ENCODE measurements at regions of chr1 and their contacts with region 1.

Region 1: DNA sequence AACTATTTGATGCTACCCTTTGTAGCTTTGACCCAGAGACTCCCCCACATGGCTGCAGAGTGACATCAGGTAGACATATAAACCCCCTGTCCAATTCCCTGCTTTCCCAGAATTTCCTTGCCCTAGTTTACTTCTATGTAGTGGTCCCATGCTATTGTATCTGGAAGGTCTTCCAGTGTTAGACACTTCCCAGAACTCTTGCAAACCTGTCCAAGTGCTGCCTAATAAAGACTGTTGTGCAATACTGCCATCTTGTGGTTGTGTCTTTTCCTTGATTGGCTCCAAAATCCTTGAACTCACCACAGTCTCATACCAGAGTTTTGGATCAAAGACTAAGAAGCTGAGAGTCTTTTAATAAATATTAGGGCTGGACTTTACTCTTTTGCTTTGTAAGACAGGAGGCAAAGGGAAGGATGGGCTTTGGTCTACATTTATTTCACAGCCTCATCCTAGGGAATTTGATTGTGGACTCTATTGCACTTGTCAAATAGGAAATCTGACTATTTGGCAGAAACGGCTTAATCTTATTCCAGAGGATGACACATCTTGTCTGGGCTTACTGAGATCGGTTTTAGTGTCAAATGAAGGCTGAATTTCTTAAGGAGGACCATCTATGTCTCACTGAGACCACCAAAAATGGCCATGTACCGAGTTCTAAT is 169.9 kb downstream of the LRRC7 start:
- DNase-seq: peak; percentile 67
- ATAC-seq: peak; percentile 70
- H3K4me3 ChIP-seq: no peak overlapping the region
- H3K27ac ChIP-seq: no peak overlapping the region
- H3K4me1 ChIP-seq: no peaks in the 10 kb centered on the region
- H3K27me3 ChIP-seq: no peaks in the 10 kb centered on the region
- CTCF ChIP-seq: peak; percentile 68
- POLR2A ChIP-seq: no peak
- RAD21 ChIP-seq: peak; percentile 78

Region 2: DNA sequence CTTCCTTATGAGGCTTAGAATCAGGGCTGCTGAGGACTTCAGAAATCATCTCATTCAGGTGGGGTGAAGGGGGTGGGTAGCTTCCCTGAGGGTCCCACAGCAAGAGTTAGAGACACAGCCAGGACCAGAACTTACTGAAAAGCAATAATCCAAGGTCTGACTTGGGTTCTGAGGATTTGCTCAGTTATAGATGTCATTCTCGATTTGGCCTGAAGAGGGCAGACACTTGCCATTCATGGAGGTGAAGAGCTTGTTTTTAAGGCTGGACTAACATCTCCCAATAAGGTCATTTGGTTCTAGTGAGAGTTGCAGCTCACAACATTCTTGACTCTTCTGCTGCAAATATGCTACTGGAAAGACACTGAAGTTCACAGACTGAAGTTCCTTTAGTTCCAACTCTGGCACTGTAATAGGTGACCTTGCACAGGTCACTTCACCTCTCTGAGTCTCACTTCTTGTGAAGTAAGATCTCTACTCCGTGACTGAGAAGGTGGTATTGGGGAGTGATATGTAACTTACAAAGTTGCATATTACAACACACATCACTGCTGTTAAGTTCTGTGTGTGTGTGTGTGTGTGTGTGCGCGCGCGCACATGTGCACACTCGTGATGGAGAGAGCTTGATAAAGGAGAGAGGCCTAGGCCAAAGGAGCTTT is 1617.4 kb before region 1 on chr1:
- CTCF ChIA-PET with region 1: no interaction called
- POLR2A ChIA-PET with region 1: no interaction called
- dilution Hi-C with region 1: no loop called
- in situ Hi-C with region 1: loop called (anchors 25 kb)
- intact Hi-C with region 1: loop called (anchors 5 kb)
- DNase-seq: peak; percentile 85
- ATAC-seq: peak; percentile 86
- H3K4me3 ChIP-seq: no peak overlapping the region
- H3K27ac ChIP-seq: no peak overlapping the region
- H3K4me1 ChIP-seq: peaks cover 9% of the 10 kb centered on the region
- H3K27me3 ChIP-seq: no peaks in the 10 kb centered on the region
- CTCF ChIP-seq: peak; percentile 85
- POLR2A ChIP-seq: no peak
- RAD21 ChIP-seq: peak; percentile 93

Region 3: GRCh38 chr1:68358439-68358838 is 1379.2 kb before region 1 on chr1:
- CTCF ChIA-PET with region 1: no interaction called
- POLR2A ChIA-PET with region 1: no interaction called
- dilution Hi-C with region 1: no loop called
- in situ Hi-C with region 1: no loop called
- intact Hi-C with region 1: loop called (anchors 5 kb)
- DNase-seq: peak; percentile 8
- ATAC-seq: peak; percentile 54
- H3K4me3 ChIP-seq: no peak overlapping the region
- H3K27ac ChIP-seq: no peak overlapping the region
- H3K4me1 ChIP-seq: peaks cover 5% of the 10 kb centered on the region
- H3K27me3 ChIP-seq: no peaks in the 10 kb centered on the region
- CTCF ChIP-seq: no peak
- POLR2A ChIP-seq: no peak
- RAD21 ChIP-seq: no peak

Region 4: GRCh38 chr1:68470388-68470970 is 1267.2 kb before region 1 on chr1:
- CTCF ChIA-PET with region 1: interaction called, 5 read pairs
- POLR2A ChIA-PET with region 1: no interaction called
- dilution Hi-C with region 1: no loop called
- in situ Hi-C with region 1: loop called (anchors 25 kb)
- intact Hi-C with region 1: loop called (anchors 1 kb)
- DNase-seq: peak; percentile 41
- ATAC-seq: peak; percentile 74
- H3K4me3 ChIP-seq: no peak overlapping the region
- H3K27ac ChIP-seq: no peak overlapping the region
- H3K4me1 ChIP-seq: no peaks in the 10 kb centered on the region
- H3K27me3 ChIP-seq: no peaks in the 10 kb centered on the region
- CTCF ChIP-seq: peak; percentile 73
- POLR2A ChIP-seq: no peak
- RAD21 ChIP-seq: peak; percentile 71

Region 5: GRCh38 chr1:68600049-68600661 is 1137.5 kb before region 1 on chr1:
- CTCF ChIA-PET with region 1: interaction called, 4 read pairs
- POLR2A ChIA-PET with region 1: no interaction called
- dilution Hi-C with region 1: no loop called
- in situ Hi-C with region 1: no loop called
- intact Hi-C with region 1: loop called (anchors 1 kb)
- DNase-seq: peak; percentile 6
- ATAC-seq: no peak
- H3K4me3 ChIP-seq: no peak overlapping the region
- H3K27ac ChIP-seq: no peak overlapping the region
- H3K4me1 ChIP-seq: no peaks in the 10 kb centered on the region
- H3K27me3 ChIP-seq: no peaks in the 10 kb centered on the region
- CTCF ChIP-seq: peak; percentile 45
- POLR2A ChIP-seq: no peak
- RAD21 ChIP-seq: peak; percentile 44

Region 6: DNA sequence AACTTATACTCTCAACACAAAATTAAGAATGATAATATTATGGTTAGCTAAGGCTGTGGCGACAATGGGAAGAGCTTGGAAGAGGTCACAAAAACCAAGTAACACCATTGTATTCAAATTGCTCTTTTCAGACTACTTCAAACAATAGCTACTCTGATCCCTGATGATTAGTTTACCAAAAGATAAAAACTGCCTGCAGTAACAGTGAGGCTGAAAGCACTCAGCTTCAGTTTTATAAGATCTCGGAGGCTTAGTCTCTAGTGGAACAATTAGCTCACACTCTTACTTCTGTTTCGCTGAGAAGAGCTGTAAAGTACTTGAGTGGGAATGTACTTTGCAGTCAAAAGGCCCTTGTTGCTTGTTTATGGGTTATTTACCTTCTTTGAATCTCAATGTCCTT is 108.6 kb after region 1 on chr1:
- CTCF ChIA-PET with region 1: no interaction called
- POLR2A ChIA-PET with region 1: no interaction called
- dilution Hi-C with region 1: no loop called
- in situ Hi-C with region 1: no loop called
- intact Hi-C with region 1: no loop called
- DNase-seq: no peak
- ATAC-seq: no peak
- H3K4me3 ChIP-seq: no peak overlapping the region
- H3K27ac ChIP-seq: no peak overlapping the region
- H3K4me1 ChIP-seq: no peaks in the 10 kb centered on the region
- H3K27me3 ChIP-seq: no peaks in the 10 kb centered on the region
- CTCF ChIP-seq: no peak
- POLR2A ChIP-seq: no peak
- RAD21 ChIP-seq: no peak